Caco-2 (cell line): ENCODE measurements at regions of chr4 and their contacts with region 1.

Region 1: GRCh38 chr4:163554870-163555465 is 60.5 kb downstream of the TMA16 start:
- DNase-seq: no peak
- H3K4me3 ChIP-seq: no peak overlapping the region
- H3K4me3 Mint-ChIP-seq: no peak overlapping the region
- H3K27ac Mint-ChIP-seq: no peak overlapping the region
- H3K4me1 ChIP-seq: no peaks in the 10 kb centered on the region
- H3K4me1 Mint-ChIP-seq: no peaks in the 10 kb centered on the region
- H3K27me3 ChIP-seq: no peaks in the 10 kb centered on the region
- H3K27me3 Mint-ChIP-seq: peaks cover 4% of the 10 kb centered on the region
- CTCF ChIP-seq: peak; percentile 42 to 49

Region 2: DNA sequence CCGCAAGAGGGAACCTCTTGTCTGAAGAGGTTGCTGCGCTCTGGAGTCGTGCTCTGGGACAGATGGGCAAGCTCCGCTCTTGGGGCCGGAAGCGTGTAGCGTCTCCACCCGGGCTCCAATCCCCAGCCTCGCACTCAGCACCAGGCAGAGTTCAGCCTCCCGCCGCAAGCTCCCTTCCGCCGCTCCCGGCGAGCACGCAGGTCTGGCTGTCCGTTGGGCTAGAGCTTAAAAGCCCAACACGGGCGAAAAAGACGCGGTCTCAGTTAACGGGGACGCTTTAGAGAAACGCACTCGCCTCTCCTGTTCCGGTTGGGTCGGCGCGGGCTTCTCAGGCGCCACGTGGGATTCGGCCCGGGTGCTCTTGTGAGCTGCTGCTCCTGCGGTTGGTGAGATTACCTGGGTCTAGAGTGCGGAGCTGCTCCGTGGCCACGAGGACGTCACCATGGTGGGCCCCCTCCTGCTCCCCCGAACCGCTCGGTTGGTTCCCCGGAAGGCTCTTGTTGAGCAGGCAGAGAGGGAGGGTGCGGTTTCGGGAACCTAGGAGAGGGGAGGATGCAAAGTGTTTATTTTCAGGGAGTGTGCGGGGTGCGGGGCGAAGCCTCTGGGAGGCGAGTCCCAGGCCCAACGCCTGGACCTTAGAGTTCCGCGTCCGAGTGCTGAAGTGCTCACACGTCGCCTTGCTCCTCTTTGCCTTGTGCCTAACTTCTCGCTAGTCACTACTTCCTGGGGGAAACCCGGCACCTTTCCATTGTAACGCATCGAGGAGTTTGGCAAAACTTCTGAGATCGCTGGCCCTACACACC is 60.4 kb before region 1 on chr4 and contains the start of gene TMA16:
- CTCF ChIA-PET with region 1: interaction called, 10 read pairs
- POLR2A ChIA-PET with region 1: interaction called, 3 read pairs
- intact Hi-C with region 1: no loop called
- DNase-seq: peak; percentile 90 to 91
- H3K4me3 ChIP-seq: peak within 1 kb of the TSS; percentile 64
- H3K4me3 Mint-ChIP-seq: peak within 1 kb of the TSS; percentile 90
- H3K27ac Mint-ChIP-seq: peak within 1 kb of the TSS; percentile 99
- H3K4me1 ChIP-seq: 0 out of 2 replicates have a peak, but pooled peaks cover 3% of the 10 kb centered on the region
- H3K4me1 Mint-ChIP-seq: peaks cover 5% of the 10 kb centered on the region
- H3K27me3 ChIP-seq: no peaks in the 10 kb centered on the region
- H3K27me3 Mint-ChIP-seq: peaks cover 3% of the 10 kb centered on the region
- CTCF ChIP-seq: no peak
- total RNA-seq, gene TMA16: 23.7 and 31.1 TPM in 2 replicates

Region 3: DNA sequence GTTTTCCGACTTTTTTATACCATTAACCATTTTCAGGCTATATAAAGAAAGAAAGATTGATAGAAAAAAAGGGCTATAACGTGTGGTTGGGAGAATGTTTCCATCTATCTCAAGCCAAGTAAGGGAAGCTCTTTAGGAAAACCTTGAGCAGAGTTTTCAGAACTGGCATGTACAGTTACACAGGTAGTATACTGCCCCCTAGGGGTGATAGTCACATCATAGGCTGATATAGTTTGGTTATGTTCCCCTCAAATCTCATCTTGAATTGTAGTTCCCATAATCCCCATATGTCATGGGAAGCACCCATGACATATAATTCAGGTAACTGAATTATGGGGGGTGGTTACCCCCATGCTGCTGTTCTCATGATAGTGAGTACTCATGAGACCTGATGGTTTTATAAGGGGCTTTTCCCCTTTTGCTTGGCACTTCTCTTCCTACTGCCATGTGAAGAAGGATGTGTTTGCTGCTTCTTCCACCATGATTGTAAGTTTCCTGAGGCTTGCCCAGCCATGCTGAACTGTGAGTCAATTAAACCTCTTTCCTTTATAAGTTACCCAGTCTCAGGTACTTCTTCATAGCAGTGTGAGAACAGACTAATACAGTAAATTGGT is 126.3 kb after region 1 on chr4:
- CTCF ChIA-PET with region 1: interaction called, 10 read pairs
- POLR2A ChIA-PET with region 1: no interaction called
- intact Hi-C with region 1: loop called (anchors 1 kb)
- DNase-seq: peak in 1 of 2 experiments; percentile 52
- H3K4me3 ChIP-seq: no peak overlapping the region
- H3K4me3 Mint-ChIP-seq: no peak overlapping the region
- H3K27ac Mint-ChIP-seq: no peak overlapping the region
- H3K4me1 ChIP-seq: no peaks in the 10 kb centered on the region
- H3K4me1 Mint-ChIP-seq: no peaks in the 10 kb centered on the region
- H3K27me3 ChIP-seq: no peaks in the 10 kb centered on the region
- H3K27me3 Mint-ChIP-seq: peaks cover 3% of the 10 kb centered on the region
- CTCF ChIP-seq: peak; percentile 55 to 61

Region 4: GRCh38 chr4:164012396-164013027 is 457.5 kb after region 1 on chr4:
- CTCF ChIA-PET with region 1: interaction called, 7 read pairs
- POLR2A ChIA-PET with region 1: no interaction called
- intact Hi-C with region 1: loop called (anchors 1 kb)
- DNase-seq: peak; percentile 40 to 57
- H3K4me3 ChIP-seq: no peak overlapping the region
- H3K4me3 Mint-ChIP-seq: no peak overlapping the region
- H3K27ac Mint-ChIP-seq: no peak overlapping the region
- H3K4me1 ChIP-seq: no peaks in the 10 kb centered on the region
- H3K4me1 Mint-ChIP-seq: no peaks in the 10 kb centered on the region
- H3K27me3 ChIP-seq: no peaks in the 10 kb centered on the region
- H3K27me3 Mint-ChIP-seq: no peaks in the 10 kb centered on the region
- CTCF ChIP-seq: peak; percentile 56 to 77

Region 5: GRCh38 chr4:164748375-164748774 is 1193.4 kb after region 1 on chr4:
- CTCF ChIA-PET with region 1: no interaction called
- POLR2A ChIA-PET with region 1: no interaction called
- intact Hi-C with region 1: loop called (anchors 5 kb)
- DNase-seq: no peak
- H3K4me3 ChIP-seq: no peak overlapping the region
- H3K4me3 Mint-ChIP-seq: no peak overlapping the region
- H3K27ac Mint-ChIP-seq: no peak overlapping the region
- H3K4me1 ChIP-seq: no peaks in the 10 kb centered on the region
- H3K4me1 Mint-ChIP-seq: no peaks in the 10 kb centered on the region
- H3K27me3 ChIP-seq: no peaks in the 10 kb centered on the region
- H3K27me3 Mint-ChIP-seq: no peaks in the 10 kb centered on the region
- CTCF ChIP-seq: peak; percentile 29 to 42